ENCODE measurements at regions of chr4 and their contacts with region 1.

Region 1: GRCh38 chr4:25065475-25065874 is 34.7 kb upstream of the LGI2 start:
- DNase-seq: no peak
- ATAC-seq: no peak
- H3K4me3 ChIP-seq: no peak overlapping the region
- H3K27ac ChIP-seq: no peak overlapping the region
- H3K4me1 ChIP-seq: no peaks in the 10 kb centered on the region
- H3K27me3 ChIP-seq: no peaks in the 10 kb centered on the region

Region 2: GRCh38 chr4:25129917-25130316 is 64.4 kb after region 1 on chr4:
- intact Hi-C with region 1: loop called in 1 of 2 experiments (anchors 10 kb)
- DNase-seq: no peak
- ATAC-seq: no peak
- H3K4me3 ChIP-seq: no peak overlapping the region
- H3K27ac ChIP-seq: no peak overlapping the region
- H3K4me1 ChIP-seq: no peaks in the 10 kb centered on the region
- H3K27me3 ChIP-seq: no peaks in the 10 kb centered on the region